Activated CD8-positive, alpha-beta T cell treated with anti-CD3 and anti-CD28 coated beads, Interleukin-2, amount 10 ng/mL, durations not matched to agents 7 days and 5 days (primary cell): ENCODE measurements at regions of chr18 and their contacts with region 1.

Region 1: DNA sequence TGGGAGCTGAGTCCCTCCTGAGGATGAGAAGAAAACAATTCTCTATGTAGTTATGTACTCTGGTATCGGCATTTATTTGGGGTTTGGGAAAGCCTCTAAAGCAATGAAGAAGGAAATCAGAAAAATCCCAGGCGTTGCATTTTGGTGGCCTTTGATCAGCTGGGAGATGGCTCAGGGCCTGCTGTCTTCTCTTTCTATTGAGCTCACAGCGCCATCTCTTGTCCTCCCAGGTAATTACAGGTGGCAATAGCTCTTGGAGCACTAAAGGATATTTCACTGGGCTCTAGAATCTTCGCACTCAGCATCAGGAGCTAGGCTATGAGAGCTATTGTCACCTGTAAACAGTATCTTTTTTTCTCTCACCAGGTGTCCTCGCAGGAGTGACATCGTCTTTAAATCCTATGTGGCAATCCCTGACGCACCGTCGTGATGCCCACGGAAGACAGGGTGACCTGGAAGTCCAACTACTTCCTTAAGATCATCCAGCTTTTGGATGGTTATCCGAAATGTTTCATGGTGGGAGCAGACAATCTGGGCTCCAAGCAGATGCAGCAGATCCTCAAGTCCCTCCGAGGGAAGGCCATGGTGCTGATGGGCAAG is 76.1 kb upstream of the PMAIP1 start:
- DNase-seq: peak; percentile 63
- ATAC-seq: no peak
- H3K4me3 Mint-ChIP-seq: no peak overlapping the region
- H3K27ac Mint-ChIP-seq: no peak overlapping the region
- H3K4me1 Mint-ChIP-seq: peaks cover 3% of the 10 kb centered on the region
- H3K27me3 Mint-ChIP-seq: peaks cover 12% of the 10 kb centered on the region

Region 2: DNA sequence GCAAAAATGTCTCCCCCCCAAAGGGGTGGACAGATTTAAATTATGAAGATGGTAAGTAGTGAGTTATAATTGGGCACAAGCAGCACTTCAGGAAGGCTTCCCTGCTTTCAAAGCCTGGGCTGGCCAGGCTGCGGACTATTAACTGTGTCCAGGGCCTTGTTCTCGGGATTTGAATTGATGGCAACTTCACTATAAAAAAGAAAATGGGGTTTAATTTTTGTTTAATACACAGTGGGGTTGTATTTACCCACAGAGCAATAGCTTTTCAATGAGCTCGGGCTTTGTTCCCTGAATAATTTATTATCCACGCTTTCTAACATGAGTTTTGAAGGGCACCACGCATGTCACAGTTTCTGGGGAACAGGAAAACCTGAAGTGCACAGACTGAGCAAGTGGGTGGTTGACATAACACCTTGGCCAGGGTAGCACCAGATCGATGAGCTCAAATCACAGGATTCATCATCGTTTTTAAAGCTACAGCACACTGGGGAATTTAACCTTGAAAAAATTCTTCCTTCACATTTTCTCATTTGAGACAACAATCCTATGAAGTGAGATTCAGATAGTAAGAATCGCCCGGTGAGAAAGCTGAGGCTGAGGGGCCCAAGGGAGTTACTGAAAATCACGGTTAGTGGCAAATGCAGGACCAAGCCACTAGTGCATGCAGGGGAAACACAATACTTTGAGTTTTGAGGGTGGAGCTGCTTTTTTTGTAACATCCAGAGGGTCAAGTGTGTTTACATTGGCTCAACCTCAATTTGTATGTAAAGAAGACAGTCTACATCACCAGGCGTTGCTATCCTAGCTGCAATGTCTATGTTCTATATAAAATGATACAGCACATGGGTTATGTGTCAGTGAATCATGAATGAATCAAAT is 435.8 kb before region 1 on chr18:
- CTCF ChIA-PET with region 1: no interaction called
- POLR2A ChIA-PET with region 1: no interaction called
- DNase-seq: no peak
- ATAC-seq: no peak
- H3K4me3 Mint-ChIP-seq: no peak overlapping the region
- H3K27ac Mint-ChIP-seq: no peak overlapping the region
- H3K4me1 Mint-ChIP-seq: no peaks in the 10 kb centered on the region
- H3K27me3 Mint-ChIP-seq: peaks cover 16% of the 10 kb centered on the region

Region 3: GRCh38 chr18:59631583-59632181 is 192.0 kb before region 1 on chr18:
- CTCF ChIA-PET with region 1: interaction called, 30 read pairs
- POLR2A ChIA-PET with region 1: no interaction called
- DNase-seq: no peak
- ATAC-seq: no peak
- H3K4me3 Mint-ChIP-seq: no peak overlapping the region
- H3K27ac Mint-ChIP-seq: no peak overlapping the region
- H3K4me1 Mint-ChIP-seq: no peaks in the 10 kb centered on the region
- H3K27me3 Mint-ChIP-seq: no peaks in the 10 kb centered on the region

Region 4: DNA sequence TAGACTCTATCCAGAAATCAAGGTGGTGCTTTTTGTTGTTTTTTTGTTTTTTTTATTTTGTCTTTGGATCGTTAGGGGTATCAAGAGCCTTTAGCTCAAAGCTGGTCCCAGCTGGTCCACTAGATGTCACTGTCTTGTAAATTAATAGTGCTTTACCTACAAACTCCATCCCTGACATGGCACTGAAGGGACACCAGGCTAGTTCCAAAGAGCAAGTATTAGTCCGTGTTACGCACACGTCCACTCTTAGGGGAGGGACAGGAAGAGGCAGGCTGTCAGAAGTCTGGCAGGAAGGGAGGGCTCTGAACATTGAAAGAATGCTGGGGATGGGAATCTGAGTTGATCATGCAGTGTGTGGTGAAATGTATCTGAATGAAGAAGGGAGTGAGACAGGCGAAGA is 40.6 kb before region 1 on chr18:
- CTCF ChIA-PET with region 1: interaction called, 58 read pairs
- POLR2A ChIA-PET with region 1: interaction called, 3 read pairs
- DNase-seq: peak; percentile 39
- ATAC-seq: no peak
- H3K4me3 Mint-ChIP-seq: no peak overlapping the region
- H3K27ac Mint-ChIP-seq: no peak overlapping the region
- H3K4me1 Mint-ChIP-seq: no peaks in the 10 kb centered on the region
- H3K27me3 Mint-ChIP-seq: peaks cover 4% of the 10 kb centered on the region

Region 5: DNA sequence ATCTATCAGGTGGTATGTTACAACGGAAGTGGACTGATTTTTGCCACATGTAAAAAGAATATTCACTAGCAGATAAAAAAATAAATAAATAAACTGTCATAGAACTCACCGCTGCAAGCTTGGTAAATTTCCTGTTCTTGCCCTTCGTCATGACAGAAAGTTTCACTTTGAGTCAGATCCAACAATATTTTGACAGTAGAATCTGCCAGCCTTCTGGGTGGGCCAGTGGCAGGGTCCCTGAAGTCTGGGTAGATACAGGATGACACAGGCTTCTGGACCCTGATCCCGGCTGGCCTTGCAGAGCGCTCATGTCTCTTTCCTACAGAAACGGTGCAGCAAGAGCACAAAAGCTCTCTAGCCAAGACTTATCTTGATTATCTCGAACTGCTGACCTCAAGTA is 21.7 kb before region 1 on chr18:
- CTCF ChIA-PET with region 1: interaction called, 18 read pairs
- POLR2A ChIA-PET with region 1: no interaction called
- DNase-seq: peak; percentile 22
- ATAC-seq: peak; percentile 60
- H3K4me3 Mint-ChIP-seq: no peak overlapping the region
- H3K27ac Mint-ChIP-seq: peak overlapping the region; percentile 28
- H3K4me1 Mint-ChIP-seq: peaks cover 9% of the 10 kb centered on the region
- H3K27me3 Mint-ChIP-seq: peaks cover 5% of the 10 kb centered on the region